Gastrocnemius medialis (tissue), 4 donors: ENCODE measurements at regions of chr2 and their contacts with region 1.

Region 1: GRCh38 chr2:142989273-142990204 is 112.1 kb downstream of the KYNU start:
- DNase-seq: no peak
- ATAC-seq: no peak
- H3K4me3 ChIP-seq: no peak overlapping the region
- H3K27ac ChIP-seq: no peak overlapping the region
- H3K4me1 ChIP-seq: no peaks in the 10 kb centered on the region
- H3K27me3 ChIP-seq: no peaks in the 10 kb centered on the region
- CTCF ChIP-seq: peak in 2 of 5 experiments; percentile 34 to 48
- POLR2A ChIP-seq: no peak

Region 2: GRCh38 chr2:142682528-142682927 is 307.0 kb before region 1 on chr2:
- in situ Hi-C with region 1: loop called in 1 of 4 experiments (anchors 25 kb)
- intact Hi-C with region 1: no loop called
- DNase-seq: no peak
- ATAC-seq: no peak
- H3K4me3 ChIP-seq: no peak overlapping the region
- H3K27ac ChIP-seq: no peak overlapping the region
- H3K4me1 ChIP-seq: no peaks in the 10 kb centered on the region
- H3K27me3 ChIP-seq: no peaks in the 10 kb centered on the region
- CTCF ChIP-seq: no peak
- POLR2A ChIP-seq: no peak

Region 3: DNA sequence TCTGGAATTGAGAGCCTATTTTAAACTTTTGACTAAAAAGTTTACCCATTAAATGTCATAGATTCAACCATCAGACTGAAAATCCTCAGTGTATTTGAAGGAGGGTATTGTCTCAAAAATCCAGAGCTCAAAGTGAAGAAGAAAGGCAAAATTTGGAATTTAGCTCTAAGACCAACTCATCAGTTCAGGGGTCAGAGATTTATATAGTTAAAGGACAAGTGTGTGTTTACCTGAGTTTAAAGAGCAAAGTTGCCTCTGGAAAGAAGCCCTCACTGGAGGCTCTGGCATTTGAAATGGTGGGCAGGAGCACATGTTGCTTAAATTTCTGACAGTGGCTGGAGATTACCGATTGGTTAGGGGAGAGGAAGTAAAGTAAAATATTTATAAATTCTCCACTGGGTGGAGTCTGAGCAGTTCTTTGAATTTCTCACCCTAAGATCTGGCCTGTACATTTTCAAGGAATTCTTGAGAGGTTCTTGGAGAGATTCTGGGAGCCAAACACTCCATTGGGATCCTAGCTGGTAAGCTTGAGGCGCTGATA is 112.3 kb before region 1 on chr2 and contains the start of gene KYNU:
- in situ Hi-C with region 1: no loop called
- intact Hi-C with region 1: no loop called
- DNase-seq: no peak
- ATAC-seq: no peak
- H3K4me3 ChIP-seq: no peak within 1 kb of the TSS
- H3K27ac ChIP-seq: no peak within 1 kb of the TSS
- H3K4me1 ChIP-seq: no peaks in the 10 kb centered on the region
- H3K27me3 ChIP-seq: no peaks in the 10 kb centered on the region
- CTCF ChIP-seq: no peak
- POLR2A ChIP-seq: no peak
- total RNA-seq, gene KYNU: 0.46 to 2.0 (median 0.61) TPM in 3 of 4 donors, not detected in the other